ENCODE measurements at regions of chr6 and their contacts with region 1.

Region 1: DNA sequence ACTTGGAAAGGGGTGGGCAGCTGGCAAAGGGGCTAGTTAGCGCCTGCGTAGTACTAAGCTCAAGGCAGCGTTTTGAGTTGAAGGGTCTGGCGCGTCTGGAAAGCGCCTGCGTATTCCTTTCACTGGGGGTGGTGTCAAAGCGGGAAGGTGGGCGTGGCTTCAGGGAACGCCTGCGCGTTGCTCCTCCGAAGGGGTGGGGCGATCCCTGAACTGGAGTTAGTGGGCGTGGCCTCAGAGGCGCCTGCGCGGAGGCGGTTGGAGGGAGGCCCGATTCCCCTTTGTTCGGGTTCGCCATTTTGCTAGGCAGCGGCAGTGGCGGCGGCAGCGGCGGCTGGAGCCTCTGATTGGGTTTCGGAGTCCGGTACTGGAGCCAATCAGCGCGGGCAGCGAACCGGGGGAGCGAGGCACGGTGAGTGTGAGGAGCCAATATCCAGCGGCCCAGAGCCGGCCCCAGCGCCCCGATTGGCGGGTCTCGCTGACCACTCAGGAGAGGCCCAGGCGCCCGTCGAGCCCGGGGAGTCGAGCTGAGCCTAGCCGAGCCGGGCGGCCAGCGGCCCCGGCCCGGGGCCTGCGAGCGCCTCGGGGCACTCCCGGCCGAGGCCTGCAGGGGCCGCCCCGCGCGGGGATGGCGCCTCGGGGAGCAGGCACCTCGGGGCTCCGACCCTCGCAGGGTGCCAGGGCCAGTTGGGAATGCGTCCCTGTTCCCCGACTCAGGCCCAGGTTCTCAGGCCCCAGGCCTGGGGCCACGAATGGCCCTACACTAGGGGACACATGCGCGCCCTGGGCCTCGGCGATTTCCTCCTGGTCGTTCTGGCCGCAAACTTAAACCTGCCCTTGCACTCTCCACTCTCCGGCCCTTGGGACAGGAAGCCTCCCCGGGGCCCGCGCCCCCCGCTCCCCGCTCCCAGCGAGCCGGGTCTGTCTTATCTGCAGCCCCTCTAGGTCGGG is at the start of gene NFYA:
- DNase-seq: peak; percentile 99 to 100 (median 100)
- ATAC-seq: peak; percentile 70
- H3K4me3 ChIP-seq: peak within 1 kb of the TSS; percentile 72 to 86
- H3K4me3 Mint-ChIP-seq: peak within 1 kb of the TSS; percentile 92
- H3K27ac ChIP-seq: peak within 1 kb of the TSS; percentile 88 to 89
- H3K27ac Mint-ChIP-seq: peak within 1 kb of the TSS; percentile 95
- H3K4me1 ChIP-seq: peaks cover 37% of the 10 kb centered on the region
- H3K4me1 Mint-ChIP-seq: peaks cover 55% of the 10 kb centered on the region
- H3K27me3 ChIP-seq: no peaks in the 10 kb centered on the region
- H3K27me3 Mint-ChIP-seq: no peaks in the 10 kb centered on the region
- CTCF ChIP-seq: peak; percentile 46
- total RNA-seq, gene NFYA: 31.7 to 32.7 TPM

Region 2: GRCh38 chr6:41182069-41183034 is 109.4 kb after region 1 on chr6:
- CTCF ChIA-PET with region 1: interaction called, 3 read pairs
- POLR2A ChIA-PET with region 1: no interaction called
- intact Hi-C with region 1: loop called in 1 of 2 experiments (anchors 2 kb)
- DNase-seq: peak in 8 of 9 experiments; percentile 28 to 78 (median 53)
- ATAC-seq: peak; percentile 93
- H3K4me3 ChIP-seq: no peak overlapping the region
- H3K4me3 Mint-ChIP-seq: no peak overlapping the region
- H3K27ac ChIP-seq: no peak overlapping the region
- H3K27ac Mint-ChIP-seq: no peak overlapping the region
- H3K4me1 ChIP-seq: peaks cover 18% of the 10 kb centered on the region
- H3K4me1 Mint-ChIP-seq: peaks cover 20% of the 10 kb centered on the region
- H3K27me3 ChIP-seq: no peaks in the 10 kb centered on the region
- H3K27me3 Mint-ChIP-seq: peaks cover 5% of the 10 kb centered on the region
- CTCF ChIP-seq: peak; percentile 62

Region 3: DNA sequence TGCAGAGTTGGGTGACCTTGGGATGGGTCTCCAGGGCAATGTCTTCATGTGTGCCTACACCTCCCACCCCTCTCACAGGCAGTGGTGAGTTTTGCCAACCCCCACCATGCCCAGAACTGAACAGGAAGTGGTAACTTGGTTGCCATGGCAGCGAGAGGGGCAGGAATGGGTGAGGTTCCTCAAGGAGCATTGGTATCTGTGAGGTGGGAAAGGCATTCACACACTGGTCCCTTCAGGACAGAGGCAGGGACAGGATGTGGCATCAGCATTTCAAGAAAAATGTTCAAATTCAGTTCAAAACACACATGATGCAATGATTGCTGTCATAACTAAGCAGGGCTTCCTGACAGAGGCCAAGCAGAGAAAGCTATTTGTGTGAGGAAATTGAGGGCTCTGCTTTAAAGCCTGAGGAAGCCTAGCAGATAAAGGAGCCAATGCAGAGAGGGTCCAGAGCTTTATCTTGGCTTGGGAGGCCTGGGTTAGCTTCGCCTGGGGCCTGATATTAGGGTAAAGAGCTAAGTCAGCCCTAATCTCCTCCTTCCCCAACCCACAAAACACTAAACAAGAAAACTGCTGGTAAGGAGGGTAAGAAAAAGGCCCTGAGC is 127.4 kb after region 1 on chr6:
- CTCF ChIA-PET with region 1: no interaction called
- POLR2A ChIA-PET with region 1: interaction called, 3 read pairs
- intact Hi-C with region 1: loop called (anchors 2 to 5 kb)
- DNase-seq: peak; percentile 28 to 85 (median 65)
- ATAC-seq: peak; percentile 76
- H3K4me3 ChIP-seq: peak overlapping the region; percentile 17 to 24
- H3K4me3 Mint-ChIP-seq: peak overlapping the region; percentile 66
- H3K27ac ChIP-seq: peak overlapping the region; percentile 78 to 98
- H3K27ac Mint-ChIP-seq: peak overlapping the region; percentile 93
- H3K4me1 ChIP-seq: peaks cover 52% of the 10 kb centered on the region
- H3K4me1 Mint-ChIP-seq: peaks cover 72% of the 10 kb centered on the region
- H3K27me3 ChIP-seq: no peaks in the 10 kb centered on the region
- H3K27me3 Mint-ChIP-seq: no peaks in the 10 kb centered on the region
- CTCF ChIP-seq: no peak

Region 4: GRCh38 chr6:41560431-41561192 is 487.7 kb after region 1 on chr6:
- CTCF ChIA-PET with region 1: no interaction called
- POLR2A ChIA-PET with region 1: no interaction called
- intact Hi-C with region 1: loop called in 1 of 2 experiments (anchors 5 kb)
- DNase-seq: peak; percentile 67 to 97 (median 85)
- ATAC-seq: peak; percentile 93
- H3K4me3 ChIP-seq: peak overlapping the region; percentile 49 to 53
- H3K4me3 Mint-ChIP-seq: peak overlapping the region; percentile 85
- H3K27ac ChIP-seq: peak overlapping the region; percentile 32 to 41
- H3K27ac Mint-ChIP-seq: peak overlapping the region; percentile 86
- H3K4me1 ChIP-seq: peaks cover 20% of the 10 kb centered on the region
- H3K4me1 Mint-ChIP-seq: peaks cover 29% of the 10 kb centered on the region
- H3K27me3 ChIP-seq: no peaks in the 10 kb centered on the region
- H3K27me3 Mint-ChIP-seq: peaks cover 12% of the 10 kb centered on the region
- CTCF ChIP-seq: no peak

Measured in CD8-positive, alpha-beta T cell (primary cell).